ENCODE measurements at regions of chr9 and their contacts with region 1.

Region 1: DNA sequence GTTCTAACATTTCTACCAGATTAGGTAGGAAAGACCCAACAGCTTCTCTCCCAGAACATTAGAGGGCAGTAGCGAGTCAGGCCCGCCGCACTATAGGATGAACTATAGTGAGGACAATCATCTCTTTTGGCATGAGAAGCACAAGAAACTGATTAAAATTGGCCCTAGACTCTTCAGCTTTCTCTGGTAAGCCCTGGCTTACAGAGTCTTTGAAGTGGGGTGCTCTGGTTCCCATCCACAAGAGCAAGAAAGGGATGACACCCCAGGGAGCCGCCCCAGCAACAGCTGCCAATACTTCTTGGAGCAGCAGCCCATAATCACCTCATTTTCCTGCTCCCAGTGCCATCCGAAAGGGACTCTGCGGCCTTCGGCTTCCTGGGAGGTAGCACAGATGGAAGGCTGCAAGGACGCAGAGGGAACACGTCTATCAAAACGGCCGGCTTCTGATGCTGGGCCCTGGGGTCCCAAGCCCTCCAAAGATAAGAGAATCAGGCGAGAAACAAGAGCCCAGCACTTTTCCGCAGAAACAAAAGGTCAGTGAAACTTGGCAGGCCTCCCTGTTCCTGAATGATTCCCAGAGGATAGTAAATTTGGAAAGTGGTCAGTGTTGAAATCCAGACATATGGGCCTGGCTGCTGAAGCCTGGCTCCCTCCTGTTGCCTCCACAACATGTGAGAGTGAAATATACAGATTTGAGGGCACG is 69.3 kb downstream of the HSD17B3 start:
- DNase-seq: peak; percentile 54
- H3K4me3 Mint-ChIP-seq: no peak overlapping the region
- H3K27ac Mint-ChIP-seq: no peak overlapping the region
- H3K4me1 Mint-ChIP-seq: no peaks in the 10 kb centered on the region
- H3K27me3 Mint-ChIP-seq: peaks cover 37% of the 10 kb centered on the region

Region 2: DNA sequence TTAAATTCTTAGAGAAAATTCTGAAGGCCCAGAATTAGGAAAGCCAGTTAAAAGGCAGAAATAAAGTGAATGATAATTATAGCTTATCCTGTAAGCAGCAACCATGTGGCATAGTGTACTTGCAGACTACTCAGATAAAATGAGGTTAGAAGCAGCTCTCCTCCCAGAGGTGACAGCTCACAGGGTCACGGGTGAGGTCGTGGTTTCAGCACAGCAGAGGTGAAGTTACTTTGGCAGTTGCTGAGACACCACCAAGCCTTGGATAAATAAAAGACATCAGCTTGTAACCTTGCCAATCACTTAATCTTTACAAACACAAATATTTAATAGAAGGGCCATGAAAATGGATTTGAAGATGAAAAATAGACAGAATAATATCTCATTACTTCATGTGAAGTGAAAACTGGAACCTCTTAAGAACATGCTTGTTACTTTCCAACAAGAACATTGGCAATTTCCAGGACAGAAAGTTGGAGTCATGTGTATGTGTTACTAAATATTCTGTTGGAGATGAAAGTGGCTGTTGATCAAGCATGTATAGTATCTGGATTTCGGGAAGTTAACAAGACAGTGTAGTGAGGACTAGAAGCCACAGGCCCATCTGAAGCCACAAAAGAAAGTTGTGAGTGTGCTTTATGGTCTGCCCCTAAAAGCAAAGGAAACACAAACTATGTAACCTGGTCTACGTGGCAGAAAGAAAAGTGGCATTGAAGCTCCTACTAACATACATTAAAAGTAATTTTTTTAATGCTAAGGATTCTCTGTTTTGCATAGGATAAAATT is 222.8 kb before region 1 on chr9:
- CTCF ChIA-PET with region 1: no interaction called
- POLR2A ChIA-PET with region 1: no interaction called
- intact Hi-C with region 1: no loop called
- DNase-seq: peak; percentile 82
- H3K4me3 Mint-ChIP-seq: no peak overlapping the region
- H3K27ac Mint-ChIP-seq: peak overlapping the region; percentile 66
- H3K4me1 Mint-ChIP-seq: peaks cover 32% of the 10 kb centered on the region
- H3K27me3 Mint-ChIP-seq: no peaks in the 10 kb centered on the region

Region 3: DNA sequence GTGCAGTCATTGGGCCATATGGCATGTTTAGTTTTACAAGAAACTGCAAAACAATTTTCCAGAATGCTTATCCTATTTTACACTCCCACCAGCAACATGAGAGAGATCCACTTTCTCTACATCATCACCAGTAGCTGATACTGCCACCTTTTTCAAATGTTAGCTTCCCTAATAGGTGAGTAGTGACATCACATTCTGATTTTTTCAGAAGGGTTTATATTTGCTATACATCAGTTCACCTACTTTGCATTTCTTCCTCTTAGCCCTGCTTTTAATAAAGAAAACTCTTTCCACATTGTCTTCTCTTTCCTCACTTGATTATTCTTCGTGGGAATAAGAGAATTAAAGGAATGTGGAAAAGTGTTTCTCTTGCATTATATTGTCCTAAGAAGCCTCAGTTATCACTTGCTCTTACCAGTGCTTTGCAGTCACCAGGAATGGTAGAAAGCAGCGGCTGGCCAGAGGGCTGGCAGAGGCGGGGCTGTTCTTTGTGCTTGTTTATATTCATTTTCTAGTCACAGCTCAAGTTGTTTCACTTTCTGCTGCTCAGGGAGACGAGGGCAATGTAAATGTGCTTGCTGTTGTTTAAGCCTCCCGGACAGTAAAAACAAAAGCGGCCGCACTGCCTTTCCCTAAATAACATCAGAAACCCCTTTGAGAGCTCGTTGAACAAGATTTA is 95.6 kb before region 1 on chr9:
- CTCF ChIA-PET with region 1: no interaction called
- POLR2A ChIA-PET with region 1: no interaction called
- intact Hi-C with region 1: no loop called
- DNase-seq: peak; percentile 35
- H3K4me3 Mint-ChIP-seq: no peak overlapping the region
- H3K27ac Mint-ChIP-seq: no peak overlapping the region
- H3K4me1 Mint-ChIP-seq: peaks cover 9% of the 10 kb centered on the region
- H3K27me3 Mint-ChIP-seq: no peaks in the 10 kb centered on the region

Region 4: DNA sequence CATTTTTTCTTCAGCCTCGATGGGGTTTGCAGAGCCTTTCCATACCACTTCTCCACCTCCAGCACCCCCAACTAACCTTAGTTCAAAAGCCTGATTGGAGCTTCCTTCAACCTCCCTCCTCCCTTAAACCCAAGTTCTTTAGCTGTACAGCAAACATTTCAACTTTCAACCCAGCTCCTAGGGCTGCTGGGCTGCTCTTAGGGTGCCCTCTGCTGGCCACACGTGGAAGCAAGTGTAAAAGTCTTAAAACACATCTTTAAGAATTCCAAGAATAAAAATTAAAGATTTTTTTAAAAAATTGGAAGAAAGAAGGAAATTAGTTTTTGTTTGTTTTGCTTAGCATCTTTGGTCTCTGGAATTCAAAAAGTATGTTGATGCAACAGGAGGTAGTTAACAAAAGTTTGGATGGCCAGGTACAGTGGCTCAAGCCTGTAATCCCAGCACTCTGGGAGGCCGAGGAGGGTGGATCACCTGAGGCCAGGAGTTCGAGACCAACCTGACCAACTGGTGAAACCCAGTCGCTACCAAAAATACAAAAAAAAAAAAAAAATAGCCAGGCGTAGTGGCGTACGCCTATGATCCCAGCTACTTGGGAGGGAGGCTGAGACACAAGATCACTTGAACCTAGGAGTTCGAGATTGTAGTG is 84.8 kb after region 1 on chr9:
- CTCF ChIA-PET with region 1: interaction called, 60 read pairs
- POLR2A ChIA-PET with region 1: no interaction called
- intact Hi-C with region 1: loop called (anchors 1 kb)
- DNase-seq: peak; percentile 55
- H3K4me3 Mint-ChIP-seq: no peak overlapping the region
- H3K27ac Mint-ChIP-seq: no peak overlapping the region
- H3K4me1 Mint-ChIP-seq: no peaks in the 10 kb centered on the region
- H3K27me3 Mint-ChIP-seq: no peaks in the 10 kb centered on the region